Heart right ventricle (tissue), 16 donors: ENCODE measurements at regions of chr7 and their contacts with region 1.

Region 1: DNA sequence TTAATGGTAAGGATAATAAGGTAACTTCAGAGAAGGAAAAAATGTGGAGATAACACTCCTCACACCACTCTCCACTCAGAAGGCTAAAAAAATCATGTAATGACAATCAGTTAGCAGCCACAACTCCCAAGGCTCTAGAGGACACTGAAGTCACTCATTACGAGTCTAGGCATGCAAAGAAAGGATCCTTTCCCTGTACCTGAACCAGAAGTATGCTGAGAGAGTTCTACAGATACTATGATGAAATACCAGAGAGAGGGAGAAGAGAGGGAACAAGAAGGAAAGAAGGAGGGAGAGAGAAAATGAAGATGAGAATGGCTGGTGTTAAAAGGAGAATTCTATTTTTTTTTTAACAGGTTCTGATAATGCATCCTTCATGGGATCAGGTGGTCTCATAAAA is 224.3 kb upstream of the PLXNA4 start:
- DNase-seq: no peak
- ATAC-seq: no peak
- H3K4me3 ChIP-seq: no peak overlapping the region
- H3K27ac ChIP-seq: no peak overlapping the region
- H3K4me1 ChIP-seq: peaks cover 0 to 24% (median 5%) of the 10 kb centered on the region in 9 donors
- H3K27me3 ChIP-seq: no peaks in the 10 kb centered on the region
- CTCF ChIP-seq: no peak

Region 2: DNA sequence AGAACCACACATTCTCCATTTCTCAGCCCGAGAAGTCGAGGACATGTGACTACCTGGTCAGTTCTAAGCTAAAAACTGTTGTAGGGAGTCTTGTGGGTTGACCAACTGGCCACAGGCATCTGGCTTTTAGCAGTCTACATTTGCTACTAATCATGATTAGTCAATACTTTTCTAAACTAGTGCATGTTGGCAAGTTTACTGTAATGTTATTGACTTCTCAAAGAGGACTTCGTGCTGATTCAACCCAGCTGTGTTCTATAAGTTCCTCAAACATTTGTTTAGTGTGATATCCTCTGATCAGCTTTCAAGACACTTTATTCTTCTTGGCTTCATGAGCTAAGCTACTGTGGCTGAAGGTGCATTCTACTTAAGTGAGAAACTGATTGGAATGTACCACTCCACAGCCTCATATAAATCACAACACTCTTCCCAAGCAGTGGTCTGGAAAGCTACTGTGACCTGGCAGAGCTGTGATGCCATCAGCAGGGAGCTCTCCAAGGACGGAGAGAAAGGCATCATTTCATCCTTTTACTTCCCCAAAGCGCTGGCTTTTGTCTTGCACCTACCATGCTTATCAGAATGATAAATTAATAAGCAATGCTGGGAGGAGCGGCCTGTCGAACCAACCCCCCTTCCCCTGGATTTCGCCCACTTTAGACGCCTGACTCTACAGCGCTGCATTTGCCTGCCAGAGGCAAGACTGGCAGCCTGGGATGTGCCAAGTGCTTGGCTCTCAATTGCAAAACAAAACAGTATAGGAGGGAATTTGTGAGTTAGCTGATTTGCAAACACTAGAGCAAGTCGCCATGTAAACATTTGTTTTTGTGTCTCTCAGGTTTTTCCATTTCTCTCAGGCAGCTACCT is 17.5 kb before region 1 on chr7:
- intact Hi-C with region 1: no loop called
- DNase-seq: no peak
- ATAC-seq: peak in 1 of 8 donors; percentile 51
- H3K4me3 ChIP-seq: no peak overlapping the region
- H3K27ac ChIP-seq: peak overlapping the region in 1 of 10 donors; percentile 8
- H3K4me1 ChIP-seq: peaks cover 0 to 3% (median 0%) of the 10 kb centered on the region in 9 donors
- H3K27me3 ChIP-seq: no peaks in the 10 kb centered on the region
- CTCF ChIP-seq: no peak

Region 3: GRCh38 chr7:133869556-133869955 is 1069.0 kb after region 1 on chr7:
- intact Hi-C with region 1: loop called in 1 of 10 experiments (anchors 5 kb)
- DNase-seq: no peak
- ATAC-seq: no peak
- H3K4me3 ChIP-seq: no peak overlapping the region
- H3K27ac ChIP-seq: no peak overlapping the region
- H3K4me1 ChIP-seq: no peaks in the 10 kb centered on the region
- H3K27me3 ChIP-seq: no peaks in the 10 kb centered on the region
- CTCF ChIP-seq: no peak